ENCODE measurements at regions of chr5 and their contacts with region 1.

Region 1: DNA sequence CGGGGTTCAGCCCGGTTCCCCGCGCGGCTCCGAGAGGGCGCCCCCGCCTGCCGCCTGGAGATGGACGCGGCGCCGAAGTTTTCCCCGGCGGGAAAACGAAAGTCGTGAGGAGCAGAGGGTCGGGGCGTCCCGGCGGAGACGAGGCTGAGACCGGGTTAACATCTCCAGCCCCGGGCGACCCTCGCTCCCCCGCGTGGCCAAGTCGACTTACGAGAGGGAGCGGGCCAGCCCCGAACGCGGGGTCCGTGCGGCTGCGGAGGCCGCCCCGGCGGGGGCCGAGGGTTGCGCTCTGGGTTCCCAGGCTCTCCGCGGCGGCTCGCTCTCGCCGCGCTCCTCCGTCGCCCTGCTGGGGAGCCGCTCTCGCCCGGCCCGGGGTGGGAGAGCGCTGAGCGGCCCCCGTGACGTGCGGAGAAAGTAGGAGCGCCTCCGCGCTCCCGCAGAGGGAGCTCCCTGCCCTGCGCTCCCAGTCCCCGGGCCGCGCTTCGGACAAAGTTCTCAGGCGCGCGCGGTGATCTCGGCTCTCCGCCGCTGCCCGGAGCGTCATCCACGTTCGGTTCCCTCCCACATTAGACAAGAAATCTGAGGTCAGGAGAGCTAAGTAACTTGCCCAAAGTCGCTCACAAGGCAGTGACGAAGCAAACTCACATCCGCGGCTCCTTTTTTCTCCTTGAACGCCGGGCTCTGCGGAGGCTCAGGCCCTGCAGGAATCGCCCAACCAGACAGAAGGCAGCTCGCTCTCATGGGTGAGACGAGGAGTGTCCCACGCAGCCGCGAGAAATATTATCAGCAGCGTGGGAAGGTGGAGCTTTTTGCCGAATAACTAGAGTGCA is 1.2 kb upstream of the GCNT4 start:
- DNase-seq: peak; percentile 68
- H3K4me3 ChIP-seq: peak overlapping the region; percentile 28 to 51 (median 48)
- H3K27ac ChIP-seq: no peak overlapping the region
- H3K4me1 ChIP-seq: peaks cover 14% of the 10 kb centered on the region
- H3K27me3 ChIP-seq: peaks cover 0 to 2% of the 10 kb centered on the region in 2 experiments
- CTCF ChIP-seq: peak in 1 of 2 donors; percentile 8
- POLR2A ChIP-seq: no peak

Region 2: GRCh38 chr5:75023368-75024159 is 30.0 kb before region 1 on chr5:
- CTCF ChIA-PET with region 1: interaction called, 3 read pairs
- POLR2A ChIA-PET with region 1: no interaction called
- dilution Hi-C with region 1: no loop called
- intact Hi-C with region 1: loop called (anchors 1 kb)
- DNase-seq: no peak
- H3K4me3 ChIP-seq: no peak overlapping the region
- H3K27ac ChIP-seq: no peak overlapping the region
- H3K4me1 ChIP-seq: no peaks in the 10 kb centered on the region
- H3K27me3 ChIP-seq: no peaks in the 10 kb centered on the region
- CTCF ChIP-seq: no peak
- POLR2A ChIP-seq: no peak

Region 3: GRCh38 chr5:75265731-75266130 is 212.2 kb after region 1 on chr5:
- CTCF ChIA-PET with region 1: interaction called, 3 read pairs
- POLR2A ChIA-PET with region 1: no interaction called
- dilution Hi-C with region 1: no loop called
- intact Hi-C with region 1: loop called (anchors 10 kb)
- DNase-seq: peak; percentile 28
- H3K4me3 ChIP-seq: no peak overlapping the region
- H3K27ac ChIP-seq: no peak overlapping the region
- H3K4me1 ChIP-seq: no peaks in the 10 kb centered on the region
- H3K27me3 ChIP-seq: no peaks in the 10 kb centered on the region
- CTCF ChIP-seq: peak in 1 of 2 donors; percentile 30
- POLR2A ChIP-seq: no peak

Region 4: GRCh38 chr5:75511435-75512384 is 458.2 kb after region 1 on chr5 and contains the starts of genes CERT1 and POLK:
- CTCF ChIA-PET with region 1: no interaction called
- POLR2A ChIA-PET with region 1: no interaction called
- dilution Hi-C with region 1: no loop called
- intact Hi-C with region 1: loop called (anchors 2 kb)
- DNase-seq: peak; percentile 99
- H3K4me3 ChIP-seq: peak within 1 kb of the TSS; percentile 83 to 96 (median 91)
- H3K27ac ChIP-seq: peak within 1 kb of the TSS; percentile 66
- H3K4me1 ChIP-seq: peaks cover 22% of the 10 kb centered on the region
- H3K27me3 ChIP-seq: no peaks in the 10 kb centered on the region
- CTCF ChIP-seq: no peak
- POLR2A ChIP-seq: peak; percentile 78
- total RNA-seq, gene CERT1: 21.3 and 25.6 TPM in 2 replicates
- total RNA-seq, gene POLK: 22.1 and 27.3 TPM in 2 replicates

Region 5: DNA sequence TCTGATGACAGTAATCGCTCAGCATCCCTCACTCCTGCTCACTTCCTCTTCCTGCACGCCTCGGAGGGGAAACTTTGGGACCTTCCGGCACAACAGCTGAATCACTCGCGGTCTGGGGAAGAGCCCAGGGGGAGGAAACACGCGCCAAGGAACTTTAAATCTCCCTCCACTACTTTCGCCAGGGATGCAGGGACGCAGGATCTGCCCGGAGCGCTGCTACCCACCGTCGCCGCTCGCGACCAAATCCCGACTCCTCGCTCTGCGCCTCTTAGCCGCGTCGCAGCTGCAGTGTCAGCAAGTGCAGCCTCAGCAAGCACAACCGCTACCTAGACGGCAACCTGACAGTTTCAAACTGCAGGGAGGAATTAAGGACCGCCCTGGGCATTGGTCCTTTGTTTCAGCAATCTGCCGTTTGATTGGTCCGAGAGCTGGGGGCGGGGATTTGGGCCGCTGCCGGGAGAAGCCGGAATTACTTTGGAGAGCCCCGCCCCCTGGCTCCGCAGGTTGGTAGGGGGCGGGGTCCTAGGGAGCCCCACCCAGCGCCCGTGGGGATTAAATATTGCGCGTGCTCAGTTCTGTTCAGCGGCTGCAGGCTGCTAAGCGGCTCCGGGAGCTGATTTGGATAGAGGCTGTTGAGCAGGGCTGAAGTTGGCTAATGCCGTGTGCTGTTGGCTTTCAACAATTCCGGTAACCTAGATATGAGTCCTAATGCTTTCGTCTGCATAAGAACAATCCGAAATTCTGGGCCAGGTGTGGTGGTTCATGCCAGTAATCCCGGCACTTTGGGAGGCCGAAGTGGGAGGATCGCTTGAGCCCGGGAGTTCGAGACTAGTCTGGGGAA is 663.8 kb after region 1 on chr5 and contains the start of gene POC5:
- CTCF ChIA-PET with region 1: no interaction called
- POLR2A ChIA-PET with region 1: no interaction called
- dilution Hi-C with region 1: no loop called
- intact Hi-C with region 1: loop called (anchors 10 kb)
- DNase-seq: peak; percentile 98
- H3K4me3 ChIP-seq: peak within 1 kb of the TSS; percentile 49 to 88 (median 86)
- H3K27ac ChIP-seq: peak within 1 kb of the TSS; percentile 53
- H3K4me1 ChIP-seq: peaks cover 7% of the 10 kb centered on the region
- H3K27me3 ChIP-seq: peaks cover 8 to 9% of the 10 kb centered on the region in 2 experiments
- CTCF ChIP-seq: no peak
- POLR2A ChIP-seq: no peak
- total RNA-seq, gene POC5: 7.8 and 8.3 TPM in 2 replicates

Region 6: GRCh38 chr5:76256116-76256889 is 1202.8 kb after region 1 on chr5:
- CTCF ChIA-PET with region 1: interaction called, 12 read pairs
- POLR2A ChIA-PET with region 1: no interaction called
- dilution Hi-C with region 1: no loop called
- intact Hi-C with region 1: no loop called
- DNase-seq: peak; percentile 57
- H3K4me3 ChIP-seq: no peak overlapping the region
- H3K27ac ChIP-seq: no peak overlapping the region
- H3K4me1 ChIP-seq: no peaks in the 10 kb centered on the region
- H3K27me3 ChIP-seq: peaks cover 0 to 7% of the 10 kb centered on the region in 2 experiments
- CTCF ChIP-seq: peak; percentile 43 to 62
- POLR2A ChIP-seq: no peak

Measured in endothelial cell of umbilical vein (primary cell).